PC-9 (cell line): ENCODE measurements at regions of chr14 and their contacts with region 1.

Region 1: GRCh38 chr14:55389330-55389729 is 22.3 kb downstream of the ATG14 start:
- DNase-seq: no peak
- H3K4me3 ChIP-seq: no peak overlapping the region
- H3K27ac ChIP-seq: no peak overlapping the region
- H3K4me1 ChIP-seq: 0 out of 2 replicates have a peak, but pooled peaks cover 6% of the 10 kb centered on the region
- H3K27me3 ChIP-seq: no peaks in the 10 kb centered on the region
- CTCF ChIP-seq: no peak

Region 2: GRCh38 chr14:55411426-55412389 is 22.4 kb after region 1 on chr14 and contains the start of gene ATG14:
- CTCF ChIA-PET with region 1: no interaction called
- POLR2A ChIA-PET with region 1: no interaction called
- intact Hi-C with region 1: loop called (anchors 1 kb)
- DNase-seq: peak; percentile 69 to 74
- H3K4me3 ChIP-seq: peak within 1 kb of the TSS; percentile 66
- H3K27ac ChIP-seq: peak within 1 kb of the TSS; percentile 97
- H3K4me1 ChIP-seq: peaks cover 32% of the 10 kb centered on the region
- H3K27me3 ChIP-seq: no peaks in the 10 kb centered on the region
- CTCF ChIP-seq: no peak
- total RNA-seq, gene ATG14: 13.6 and 14.6 TPM in 2 replicates